HCT116 (cell line): ENCODE measurements at regions of chr2 and their contacts with region 1.

Region 1: GRCh38 chr2:149799013-149799705 is 211.6 kb upstream of the MMADHC start:
- DNase-seq: peak; percentile 2
- ATAC-seq: peak; percentile 80
- H3K4me3 ChIP-seq: no peak overlapping the region
- H3K27ac ChIP-seq: no peak overlapping the region
- H3K4me1 ChIP-seq: no peaks in the 10 kb centered on the region
- H3K27me3 ChIP-seq: no peaks in the 10 kb centered on the region
- CTCF ChIP-seq: peak in 2 of 3 experiments; percentile 49 to 51; a peak in 3 of 6 replicates
- POLR2A ChIP-seq: no peak
- RAD21 ChIP-seq: peak; percentile 77

Region 2: DNA sequence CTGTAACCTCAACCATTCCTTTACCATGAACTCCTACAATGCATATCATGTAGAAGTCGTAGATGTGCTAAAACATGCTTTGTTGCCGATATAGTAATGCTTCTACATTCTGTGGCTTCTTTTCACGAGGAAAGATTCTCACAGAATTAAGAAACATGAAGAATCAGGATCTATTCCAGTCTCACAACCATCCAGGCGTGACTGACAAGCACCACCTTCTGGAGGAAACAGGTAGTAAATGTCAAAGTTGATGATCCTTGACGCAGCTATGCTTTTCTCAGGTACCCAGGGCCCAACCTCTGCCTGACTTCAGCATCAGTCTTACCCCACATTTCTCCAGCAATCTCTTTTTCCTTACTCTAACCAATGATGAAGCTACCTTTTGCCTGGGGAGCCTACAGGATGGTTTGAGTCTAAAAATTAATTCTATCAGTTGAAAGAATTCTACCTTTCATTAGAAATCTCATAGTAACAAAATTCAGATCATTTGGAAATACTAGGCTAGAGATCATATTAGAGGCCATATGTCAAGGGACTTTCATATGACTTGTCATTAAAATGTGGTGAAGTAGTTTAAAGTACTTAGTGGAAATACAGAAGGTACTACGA is 811.6 kb after region 1 on chr2:
- CTCF ChIA-PET with region 1: no interaction called
- POLR2A ChIA-PET with region 1: no interaction called
- RAD21 ChIA-PET with region 1: no interaction called
- intact Hi-C with region 1: loop called (anchors 1 kb)
- DNase-seq: peak; percentile 36
- ATAC-seq: peak; percentile 94
- H3K4me3 ChIP-seq: no peak overlapping the region
- H3K27ac ChIP-seq: no peak overlapping the region
- H3K4me1 ChIP-seq: no peaks in the 10 kb centered on the region
- H3K27me3 ChIP-seq: no peaks in the 10 kb centered on the region
- CTCF ChIP-seq: peak; percentile 54 to 75 (median 60); a peak in 5 of 6 replicates
- POLR2A ChIP-seq: no peak
- RAD21 ChIP-seq: peak; percentile 80